Naive thymus-derived CD4-positive, alpha-beta T cell (primary cell): ENCODE measurements at regions of chr3 and their contacts with region 1.

Region 1: DNA sequence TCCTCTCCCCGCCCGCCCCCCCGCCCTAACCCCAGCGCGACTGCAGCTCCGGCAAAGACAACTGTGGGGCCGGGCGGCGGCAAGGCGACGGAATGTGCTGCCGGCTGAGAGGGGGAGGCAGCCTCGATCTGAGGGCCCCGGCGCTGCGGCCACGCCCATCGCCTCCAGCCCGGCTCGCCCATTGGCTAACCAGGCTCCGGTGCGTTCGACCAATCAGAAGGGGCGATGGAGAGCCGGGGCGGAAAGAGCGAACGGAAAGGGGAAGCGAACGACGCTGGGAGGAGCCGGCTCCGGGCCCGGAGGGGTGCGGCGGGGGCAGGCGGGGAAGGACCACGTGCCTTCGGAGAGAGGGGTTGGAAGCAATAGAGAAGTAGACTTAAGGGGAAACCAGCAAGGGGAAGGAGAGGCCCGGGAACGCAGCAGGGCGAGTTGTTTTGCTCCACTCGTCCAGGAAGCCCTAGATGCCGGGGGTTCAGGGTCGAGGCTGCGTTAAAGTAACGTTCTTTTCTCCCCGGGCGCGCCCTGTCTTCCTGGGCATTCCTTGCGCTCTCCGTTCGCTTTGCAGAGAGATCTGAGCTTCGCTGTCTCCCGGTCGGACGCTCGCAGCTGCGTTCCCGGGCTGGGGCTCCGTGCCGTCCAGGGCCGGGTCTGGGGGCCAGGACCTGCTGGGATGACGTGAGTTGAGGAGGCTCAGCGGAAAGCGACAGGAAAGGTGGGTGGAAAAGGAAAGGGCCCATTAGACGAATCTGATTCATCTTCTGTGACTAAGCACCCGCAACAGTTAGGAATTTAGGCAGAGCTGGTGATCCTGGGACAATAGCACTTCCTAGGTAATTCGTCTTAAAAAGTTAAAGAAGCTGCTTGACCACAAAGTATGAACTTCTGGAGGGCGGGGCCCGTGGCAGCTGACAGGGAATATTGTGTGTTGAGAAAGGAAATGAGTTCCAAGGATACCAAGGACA is at the start of gene KPNA4:
- DNase-seq: peak; percentile 96 to 98 (median 97)
- ATAC-seq: peak; percentile 95
- H3K4me3 ChIP-seq: peak within 1 kb of the TSS; percentile 86
- H3K4me3 Mint-ChIP-seq: peak within 1 kb of the TSS; percentile 86 to 98 (median 97)
- H3K27ac ChIP-seq: peak within 1 kb of the TSS; percentile 95
- H3K27ac Mint-ChIP-seq: peak within 1 kb of the TSS; percentile 91 to 97 (median 95)
- H3K4me1 ChIP-seq: peaks cover 16 to 19% of the 10 kb centered on the region in 2 donors
- H3K4me1 Mint-ChIP-seq: peaks cover 40 to 58% (median 54%) of the 10 kb centered on the region in 7 donors
- H3K27me3 ChIP-seq: no peaks in the 10 kb centered on the region
- H3K27me3 Mint-ChIP-seq: peaks cover 0 to 2% (median 0%) of the 10 kb centered on the region in 5 donors
- total RNA-seq, gene KPNA4: 38.3 to 55.4 (median 45.9) TPM

Region 2: DNA sequence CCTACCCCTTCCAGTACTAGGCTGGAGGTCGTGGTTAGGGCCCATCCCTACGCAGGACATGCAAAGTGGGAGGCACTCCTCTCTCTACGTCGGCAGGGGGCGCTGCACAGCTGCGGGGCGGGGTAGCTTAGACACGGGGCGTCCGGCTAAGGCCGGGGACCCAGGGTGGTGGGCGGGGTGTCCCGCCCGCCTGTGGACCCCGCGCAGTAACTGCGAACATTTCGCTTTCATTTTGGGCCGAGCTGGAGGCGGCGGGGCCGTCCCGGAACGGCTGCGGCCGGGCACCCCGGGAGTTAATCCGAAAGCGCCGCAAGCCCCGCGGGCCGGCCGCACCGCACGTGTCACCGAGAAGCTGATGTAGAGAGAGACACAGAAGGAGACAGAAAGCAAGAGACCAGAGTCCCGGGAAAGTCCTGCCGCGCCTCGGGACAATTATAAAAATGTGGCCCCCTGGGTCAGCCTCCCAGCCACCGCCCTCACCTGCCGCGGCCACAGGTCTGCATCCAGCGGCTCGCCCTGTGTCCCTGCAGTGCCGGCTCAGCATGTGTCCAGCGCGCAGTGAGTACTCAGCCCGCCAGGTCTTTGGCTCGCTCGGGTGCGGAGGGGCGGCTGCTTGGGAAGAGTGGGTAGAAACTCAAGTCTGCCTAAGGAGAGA is 577.0 kb before region 1 on chr3 and contains the start of gene IL12A:
- CTCF ChIA-PET with region 1: no interaction called
- POLR2A ChIA-PET with region 1: no interaction called
- intact Hi-C with region 1: loop called (anchors 5 to 10 kb)
- DNase-seq: peak; percentile 59 to 85 (median 75)
- ATAC-seq: peak; percentile 98
- H3K4me3 ChIP-seq: peak within 1 kb of the TSS; percentile 56
- H3K4me3 Mint-ChIP-seq: peak within 1 kb of the TSS; percentile 82 to 89 (median 84)
- H3K27ac ChIP-seq: peak within 1 kb of the TSS; percentile 32
- H3K27ac Mint-ChIP-seq: peak within 1 kb of the TSS in 5 of 9 donors; percentile 58 to 65 (median 62)
- H3K4me1 ChIP-seq: peaks cover 6 to 9% of the 10 kb centered on the region in 2 donors
- H3K4me1 Mint-ChIP-seq: peaks cover 6 to 33% (median 15%) of the 10 kb centered on the region in 7 donors
- H3K27me3 ChIP-seq: no peaks in the 10 kb centered on the region
- H3K27me3 Mint-ChIP-seq: peaks cover 0 to 24% (median 10%) of the 10 kb centered on the region in 5 donors
- total RNA-seq, gene IL12A: 0.40 to 1.8 (median 1.3) TPM

Region 3: GRCh38 chr3:160486459-160486869 is 79.3 kb before region 1 on chr3:
- CTCF ChIA-PET with region 1: no interaction called
- POLR2A ChIA-PET with region 1: no interaction called
- intact Hi-C with region 1: loop called in 1 of 2 experiments (anchors 5 kb)
- DNase-seq: peak in 5 of 9 donors; percentile 4 to 27 (median 18)
- ATAC-seq: no peak
- H3K4me3 ChIP-seq: no peak overlapping the region
- H3K4me3 Mint-ChIP-seq: peak overlapping the region in 2 of 10 donors; percentile 65 to 76
- H3K27ac ChIP-seq: no peak overlapping the region
- H3K27ac Mint-ChIP-seq: no peak overlapping the region
- H3K4me1 ChIP-seq: no peaks in the 10 kb centered on the region
- H3K4me1 Mint-ChIP-seq: peaks cover 0 to 10% (median 5%) of the 10 kb centered on the region in 7 donors
- H3K27me3 ChIP-seq: no peaks in the 10 kb centered on the region
- H3K27me3 Mint-ChIP-seq: peaks cover 0 to 14% (median 5%) of the 10 kb centered on the region in 5 donors

Region 4: GRCh38 chr3:160544844-160545503 is 20.7 kb before region 1 on chr3:
- CTCF ChIA-PET with region 1: no interaction called
- POLR2A ChIA-PET with region 1: no interaction called
- intact Hi-C with region 1: loop called (anchors 2 kb)
- DNase-seq: no peak
- ATAC-seq: no peak
- H3K4me3 ChIP-seq: no peak overlapping the region
- H3K4me3 Mint-ChIP-seq: peak overlapping the region in 4 of 10 donors; percentile 1 to 50 (median 16)
- H3K27ac ChIP-seq: no peak overlapping the region
- H3K27ac Mint-ChIP-seq: peak overlapping the region in 5 of 9 donors; percentile 0 to 58 (median 26)
- H3K4me1 ChIP-seq: peaks cover 0 to 5% of the 10 kb centered on the region in 2 donors
- H3K4me1 Mint-ChIP-seq: peaks cover 33 to 95% (median 86%) of the 10 kb centered on the region in 7 donors
- H3K27me3 ChIP-seq: no peaks in the 10 kb centered on the region
- H3K27me3 Mint-ChIP-seq: no peaks in the 10 kb centered on the region

Region 5: GRCh38 chr3:161108840-161109239 is 543.1 kb after region 1 on chr3:
- CTCF ChIA-PET with region 1: no interaction called
- POLR2A ChIA-PET with region 1: no interaction called
- intact Hi-C with region 1: no loop called
- DNase-seq: no peak
- ATAC-seq: no peak
- H3K4me3 ChIP-seq: no peak overlapping the region
- H3K4me3 Mint-ChIP-seq: no peak overlapping the region
- H3K27ac ChIP-seq: no peak overlapping the region
- H3K27ac Mint-ChIP-seq: no peak overlapping the region
- H3K4me1 ChIP-seq: no peaks in the 10 kb centered on the region
- H3K4me1 Mint-ChIP-seq: peaks cover 0 to 16% (median 8%) of the 10 kb centered on the region in 7 donors
- H3K27me3 ChIP-seq: no peaks in the 10 kb centered on the region
- H3K27me3 Mint-ChIP-seq: peaks cover 31 to 48% (median 38%) of the 10 kb centered on the region in 5 donors

Region 6: DNA sequence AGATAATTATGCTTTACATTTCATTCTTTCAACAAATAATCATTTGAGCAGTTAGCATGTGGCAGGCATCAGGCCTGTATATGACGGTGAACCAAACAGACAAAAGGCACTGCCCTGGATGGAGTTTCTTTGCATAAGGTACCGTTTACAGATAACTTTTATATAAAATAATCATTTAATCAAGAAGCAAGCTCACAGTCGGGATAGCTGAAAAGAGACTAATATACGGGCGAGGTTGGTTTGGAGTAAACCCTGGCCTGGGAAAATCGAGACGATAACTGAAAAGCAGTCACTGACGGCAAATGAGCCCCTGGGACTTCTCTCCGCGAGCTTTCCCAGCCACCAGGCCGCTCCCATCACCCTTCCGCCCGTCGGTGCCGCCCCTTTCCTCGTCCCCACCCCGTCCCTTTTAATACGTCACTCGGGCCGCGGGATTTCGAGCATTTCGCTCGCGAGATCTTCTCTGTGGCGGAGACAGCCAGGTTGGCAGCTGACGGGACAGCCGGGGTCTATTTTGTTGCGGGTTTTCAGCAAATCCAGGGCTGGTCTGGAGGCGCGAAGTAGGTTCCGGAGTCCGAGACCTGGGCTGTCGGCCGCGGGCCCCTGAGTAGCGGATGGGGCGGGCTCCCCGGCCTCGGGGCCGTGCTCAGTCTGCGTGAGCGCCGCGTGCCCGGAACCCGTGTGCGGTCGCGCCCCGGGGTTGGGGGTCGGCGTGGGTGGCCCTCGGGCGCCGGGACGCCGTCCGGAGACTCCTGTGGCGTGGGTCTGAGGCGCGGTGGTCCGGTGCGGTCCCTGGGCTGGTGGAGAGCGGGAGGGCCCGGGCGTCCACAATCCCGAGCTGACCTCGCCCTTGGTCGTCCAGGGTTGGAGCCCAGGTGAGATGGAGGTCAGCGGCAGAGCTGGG is 655.4 kb after region 1 on chr3 and contains the start of gene NMD3:
- CTCF ChIA-PET with region 1: no interaction called
- POLR2A ChIA-PET with region 1: no interaction called
- intact Hi-C with region 1: loop called (anchors 1 kb)
- DNase-seq: peak; percentile 84 to 92 (median 89)
- ATAC-seq: peak; percentile 98
- H3K4me3 ChIP-seq: peak within 1 kb of the TSS; percentile 86
- H3K4me3 Mint-ChIP-seq: peak within 1 kb of the TSS; percentile 87 to 96 (median 93)
- H3K27ac ChIP-seq: peak within 1 kb of the TSS; percentile 97
- H3K27ac Mint-ChIP-seq: peak within 1 kb of the TSS; percentile 89 to 98 (median 94)
- H3K4me1 ChIP-seq: peaks cover 18 to 21% of the 10 kb centered on the region in 2 donors
- H3K4me1 Mint-ChIP-seq: peaks cover 12 to 52% (median 36%) of the 10 kb centered on the region in 7 donors
- H3K27me3 ChIP-seq: no peaks in the 10 kb centered on the region
- H3K27me3 Mint-ChIP-seq: peaks cover 4 to 22% (median 11%) of the 10 kb centered on the region in 5 donors
- total RNA-seq, gene NMD3: 37.3 to 52.6 (median 40.7) TPM